Activated CD8-positive, alpha-beta T cell treated with anti-CD3 and anti-CD28 coated beads for 36 hours (primary cell): ENCODE measurements at regions of chr2 and their contacts with region 1.

Region 1: DNA sequence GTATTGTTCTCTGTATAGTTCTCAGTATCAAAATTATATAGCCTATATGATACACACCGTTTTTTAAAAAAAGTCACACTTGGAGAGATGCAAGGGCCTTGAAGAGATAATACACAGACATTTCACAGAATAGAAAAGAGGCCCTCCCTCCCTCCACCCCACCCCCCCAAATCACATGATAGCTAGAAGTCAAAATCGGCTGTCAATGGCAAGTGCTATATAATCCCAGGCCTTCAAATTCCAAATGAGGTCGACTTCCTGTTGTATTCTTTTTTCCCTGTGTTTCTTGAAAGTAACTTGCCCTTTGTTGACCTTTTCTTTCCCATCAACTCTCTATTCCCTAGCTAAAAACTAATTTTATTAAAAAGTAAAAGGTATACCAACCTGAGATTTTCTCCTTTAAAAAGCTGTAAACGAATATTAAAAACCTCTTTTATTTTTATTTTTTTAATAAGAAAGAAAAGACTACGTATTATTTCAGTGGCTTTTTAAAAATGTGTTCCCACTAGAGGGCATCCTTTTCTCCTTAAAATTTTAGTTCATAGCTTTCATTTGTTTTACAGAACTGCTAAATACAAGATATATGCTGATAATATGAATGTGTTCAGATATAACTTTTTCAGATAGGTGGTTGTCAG is 46.6 kb downstream of the KCMF1 start:
- DNase-seq: no peak
- ATAC-seq: no peak
- H3K4me3 Mint-ChIP-seq: no peak overlapping the region
- H3K27ac Mint-ChIP-seq: peak overlapping the region; percentile 45
- H3K4me1 Mint-ChIP-seq: peaks cover 61% of the 10 kb centered on the region
- H3K27me3 Mint-ChIP-seq: no peaks in the 10 kb centered on the region
- CTCF ChIP-seq: peak; percentile 50

Region 2: DNA sequence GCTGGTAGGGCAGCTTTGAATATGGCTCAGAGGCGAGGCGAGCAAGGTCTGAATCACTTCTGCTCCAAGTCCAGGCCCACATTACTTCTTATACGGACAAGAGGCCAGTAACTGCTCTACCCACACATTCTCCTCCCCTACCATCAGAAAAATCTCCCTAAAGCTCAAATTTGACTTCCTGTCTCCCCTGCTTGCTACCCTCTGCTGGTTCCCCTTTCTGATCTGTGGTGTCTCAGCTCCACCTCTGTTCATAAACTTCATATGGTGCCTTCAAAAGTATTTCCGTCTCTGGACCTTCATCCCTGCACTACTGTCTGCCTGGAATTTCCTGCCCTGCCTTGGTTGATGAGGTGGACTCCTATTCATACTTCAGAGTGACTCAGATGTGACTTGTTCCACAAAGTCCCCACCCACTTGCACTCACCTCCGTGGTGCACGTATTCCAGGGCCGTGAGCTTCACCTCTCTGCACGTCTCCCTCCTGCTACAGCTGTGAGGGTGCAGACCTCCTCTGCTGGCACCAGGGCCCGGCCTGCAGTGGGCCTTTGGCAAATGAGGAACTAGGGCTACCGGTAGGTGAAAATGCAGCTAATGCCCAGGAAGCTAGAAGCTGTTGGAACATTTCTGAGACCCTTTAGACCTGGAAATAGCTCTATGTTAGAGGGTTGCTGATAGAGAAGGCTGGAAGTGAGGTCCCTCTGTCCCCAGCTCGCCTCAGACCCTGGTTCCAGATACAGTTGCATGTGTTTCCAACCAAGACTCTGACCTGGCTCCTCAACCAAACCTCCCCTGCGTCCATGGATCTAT is 71.1 kb before region 1 on chr2:
- CTCF ChIA-PET with region 1: interaction called, 24 read pairs
- POLR2A ChIA-PET with region 1: interaction called, 6 read pairs
- intact Hi-C with region 1: no loop called
- DNase-seq: peak; percentile 92
- ATAC-seq: peak; percentile 85
- H3K4me3 Mint-ChIP-seq: peak overlapping the region; percentile 68
- H3K27ac Mint-ChIP-seq: peak overlapping the region; percentile 95
- H3K4me1 Mint-ChIP-seq: peaks cover 47% of the 10 kb centered on the region
- H3K27me3 Mint-ChIP-seq: no peaks in the 10 kb centered on the region
- CTCF ChIP-seq: no peak

Region 3: DNA sequence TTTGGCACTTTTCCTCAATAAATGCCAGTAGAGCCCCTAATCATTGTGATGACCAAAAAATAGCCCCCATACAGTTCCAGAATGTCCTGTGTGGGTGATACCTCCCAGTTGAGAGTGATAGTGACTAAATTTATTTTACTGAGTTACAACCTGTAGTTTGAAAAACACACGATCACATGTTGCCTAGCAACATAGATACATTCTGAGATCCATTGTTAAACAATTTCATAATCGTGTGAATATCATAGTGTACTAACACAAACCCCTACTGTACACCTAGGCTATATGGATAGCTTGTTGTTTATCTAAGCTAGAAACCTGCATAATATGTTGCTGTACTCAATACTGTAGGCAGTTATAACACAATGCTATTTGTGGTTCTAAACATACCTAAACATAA is 15.9 kb before region 1 on chr2:
- CTCF ChIA-PET with region 1: interaction called, 23 read pairs
- POLR2A ChIA-PET with region 1: no interaction called
- intact Hi-C with region 1: no loop called
- DNase-seq: no peak
- ATAC-seq: peak; percentile 32
- H3K4me3 Mint-ChIP-seq: no peak overlapping the region
- H3K27ac Mint-ChIP-seq: peak overlapping the region; percentile 74
- H3K4me1 Mint-ChIP-seq: peaks cover 61% of the 10 kb centered on the region
- H3K27me3 Mint-ChIP-seq: no peaks in the 10 kb centered on the region
- CTCF ChIP-seq: no peak